HAP-1 (cell line): ENCODE measurements at regions of chr19 and their contacts with region 1.

Region 1: DNA sequence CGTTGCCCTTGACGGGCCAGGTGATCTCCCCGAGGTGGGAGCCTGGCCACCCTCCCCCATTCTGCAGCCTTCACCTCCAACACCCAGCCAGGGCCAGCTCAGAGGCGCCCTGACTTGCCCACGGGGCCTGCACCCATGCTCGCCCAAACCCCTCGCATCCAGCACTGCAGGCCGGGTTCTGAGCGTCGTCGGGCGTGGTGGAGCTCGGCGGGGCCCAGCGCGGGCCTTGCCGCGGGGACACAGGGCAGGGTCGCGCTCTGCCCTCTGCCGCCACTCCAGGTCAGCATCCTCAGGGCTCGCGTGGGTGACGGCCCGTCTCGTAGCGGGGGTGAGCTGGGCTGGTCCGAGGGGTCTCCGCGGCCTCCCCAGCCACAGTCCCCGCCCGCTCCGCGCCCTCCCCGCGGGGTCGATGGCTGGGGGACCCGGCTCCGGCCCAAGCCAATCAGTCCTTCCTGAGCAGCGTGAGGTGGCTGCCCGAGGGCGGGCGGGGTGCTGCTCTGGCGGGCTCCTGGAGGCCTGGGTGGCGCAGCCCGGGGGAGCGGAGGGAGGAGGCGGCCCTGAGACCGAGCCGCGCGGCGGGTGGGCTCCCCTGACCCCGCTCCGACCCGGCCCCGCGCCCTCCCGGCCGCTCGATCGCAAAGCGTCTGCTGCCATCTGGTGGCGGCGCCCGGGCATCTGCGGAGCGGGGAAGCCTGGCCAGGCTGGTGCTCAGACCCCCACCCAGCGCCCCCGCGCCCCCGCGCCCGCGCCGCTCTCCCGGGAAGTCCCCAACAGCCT is 61.4 kb downstream of the CCNE1 start:
- DNase-seq: peak; percentile 56 to 88
- H3K4me3 ChIP-seq: peak overlapping the region; percentile 32
- H3K4me1 ChIP-seq: peaks cover 10% of the 10 kb centered on the region
- H3K27me3 ChIP-seq: no peaks in the 10 kb centered on the region

Region 2: GRCh38 chr19:29610563-29611271 is 262.5 kb before region 1 on chr19:
- in situ Hi-C with region 1: loop called (anchors 10 kb)
- DNase-seq: peak; percentile 65 to 85
- H3K4me3 ChIP-seq: no peak overlapping the region
- H3K4me1 ChIP-seq: no peaks in the 10 kb centered on the region; the same call in 1 of the 2 replicates
- H3K27me3 ChIP-seq: no peaks in the 10 kb centered on the region

Region 3: DNA sequence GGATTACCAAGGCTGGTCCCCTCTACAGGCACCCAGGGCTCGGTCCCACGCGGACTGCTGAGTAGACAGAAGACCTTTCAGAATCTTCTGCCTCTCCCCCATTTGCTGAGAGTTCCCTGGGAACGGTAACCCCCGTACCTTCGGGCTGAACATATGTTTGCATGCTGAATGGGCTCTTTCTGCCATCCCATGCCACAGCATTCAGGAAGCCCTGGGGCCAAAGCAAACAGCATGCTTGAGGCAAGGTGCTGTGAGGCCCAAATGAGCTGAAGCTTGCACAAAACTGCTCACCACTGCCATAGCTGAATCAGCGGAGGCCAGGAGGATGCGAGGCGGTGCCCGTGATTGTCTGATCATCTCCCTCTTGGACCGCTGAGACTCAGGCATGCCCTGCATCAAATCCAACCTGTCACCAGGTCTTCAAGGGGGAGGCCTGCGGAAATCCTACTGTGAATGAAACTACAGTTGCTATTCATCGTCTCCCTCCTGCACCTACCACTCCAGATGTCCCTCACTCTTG is 141.8 kb before region 1 on chr19:
- in situ Hi-C with region 1: loop called (anchors 5 kb)
- DNase-seq: no peak
- H3K4me3 ChIP-seq: no peak overlapping the region
- H3K4me1 ChIP-seq: no peaks in the 10 kb centered on the region
- H3K27me3 ChIP-seq: no peaks in the 10 kb centered on the region

Region 4: DNA sequence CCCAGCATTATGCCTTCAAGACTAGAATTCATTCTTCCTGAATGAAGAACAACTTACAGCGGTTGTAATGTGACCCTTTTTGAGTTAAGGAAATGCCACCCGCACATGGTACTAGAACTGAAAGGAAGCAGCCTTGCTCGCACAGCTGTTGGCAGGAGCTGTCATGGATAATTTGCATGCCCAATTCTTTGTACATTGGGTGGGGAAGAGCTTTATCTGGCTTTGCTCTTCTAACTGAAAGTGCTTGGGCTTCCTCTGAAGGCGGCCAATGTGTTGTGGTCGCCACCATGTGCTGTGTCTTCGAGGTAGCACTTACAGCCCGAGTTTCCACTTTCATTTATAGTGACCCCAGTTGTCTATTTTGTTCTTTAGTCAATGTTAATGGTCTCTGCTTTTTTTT is 58.0 kb before region 1 on chr19:
- in situ Hi-C with region 1: no loop called
- DNase-seq: no peak
- H3K4me3 ChIP-seq: no peak overlapping the region
- H3K4me1 ChIP-seq: peaks cover 11% of the 10 kb centered on the region
- H3K27me3 ChIP-seq: no peaks in the 10 kb centered on the region